ENCODE measurements at regions of chr10 and their contacts with region 1.

Region 1: DNA sequence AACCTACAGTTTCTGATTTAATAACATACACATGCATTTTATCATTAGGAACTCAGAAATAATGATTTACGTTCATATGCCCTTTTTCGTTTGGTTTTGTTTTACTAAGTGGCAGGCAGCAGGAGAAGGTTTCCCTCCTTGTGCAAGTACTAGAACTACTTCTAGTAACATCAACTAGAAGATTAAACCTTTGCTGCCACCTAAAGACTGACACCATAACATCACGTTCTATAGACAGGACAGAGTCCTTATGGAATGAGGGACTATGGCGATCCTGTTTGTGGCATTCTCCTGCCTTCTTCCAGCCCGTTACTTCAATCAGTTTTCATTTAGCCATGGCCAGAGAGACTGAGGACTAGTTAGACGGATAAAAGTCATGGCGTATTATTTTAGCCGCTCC is 53.2 kb downstream of the GAD2 start:
- DNase-seq: no peak
- ATAC-seq: no peak
- H3K4me3 Mint-ChIP-seq: no peak overlapping the region
- H3K27ac Mint-ChIP-seq: no peak overlapping the region
- H3K4me1 Mint-ChIP-seq: no peaks in the 10 kb centered on the region
- H3K27me3 Mint-ChIP-seq: peaks cover 9% of the 10 kb centered on the region
- CTCF ChIP-seq: no peak

Region 2: DNA sequence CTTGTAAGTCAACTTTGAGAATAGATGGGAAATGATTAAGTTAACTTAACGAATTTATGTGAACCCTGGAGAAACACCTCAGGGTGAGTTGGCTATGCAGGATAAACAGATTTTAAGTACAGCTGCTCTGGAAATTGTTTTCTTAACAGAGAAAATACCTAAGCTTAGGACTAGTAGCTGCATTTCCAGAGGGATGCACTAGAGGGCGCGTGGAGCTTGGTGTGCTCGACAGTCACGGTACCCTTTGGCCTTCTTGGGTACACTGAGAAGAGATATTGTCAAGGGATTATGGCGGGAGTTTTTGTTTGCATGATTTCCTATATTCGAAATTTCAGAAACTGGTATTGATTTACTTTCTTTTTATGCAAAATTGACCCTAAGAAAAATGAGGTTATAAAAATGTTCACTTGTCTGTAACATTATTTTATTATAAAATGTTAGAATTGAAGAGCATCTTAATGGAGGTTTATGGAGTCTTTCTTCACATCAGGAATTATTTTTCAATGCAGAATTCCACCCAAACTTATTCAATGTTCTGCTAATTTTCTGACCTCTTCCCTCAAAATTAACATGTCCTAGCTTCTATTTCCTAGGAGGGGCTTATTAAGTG is 394.1 kb before region 1 on chr10:
- CTCF ChIA-PET with region 1: interaction called, 14 read pairs
- POLR2A ChIA-PET with region 1: no interaction called
- intact Hi-C with region 1: no loop called
- DNase-seq: peak; percentile 85
- ATAC-seq: peak; percentile 79
- H3K4me3 Mint-ChIP-seq: no peak overlapping the region
- H3K27ac Mint-ChIP-seq: no peak overlapping the region
- H3K4me1 Mint-ChIP-seq: no peaks in the 10 kb centered on the region
- H3K27me3 Mint-ChIP-seq: peaks cover 9% of the 10 kb centered on the region
- CTCF ChIP-seq: peak; percentile 94